Gastrocnemius medialis (tissue), 4 donors: ENCODE measurements at regions of chr6 and their contacts with region 1.

Region 1: DNA sequence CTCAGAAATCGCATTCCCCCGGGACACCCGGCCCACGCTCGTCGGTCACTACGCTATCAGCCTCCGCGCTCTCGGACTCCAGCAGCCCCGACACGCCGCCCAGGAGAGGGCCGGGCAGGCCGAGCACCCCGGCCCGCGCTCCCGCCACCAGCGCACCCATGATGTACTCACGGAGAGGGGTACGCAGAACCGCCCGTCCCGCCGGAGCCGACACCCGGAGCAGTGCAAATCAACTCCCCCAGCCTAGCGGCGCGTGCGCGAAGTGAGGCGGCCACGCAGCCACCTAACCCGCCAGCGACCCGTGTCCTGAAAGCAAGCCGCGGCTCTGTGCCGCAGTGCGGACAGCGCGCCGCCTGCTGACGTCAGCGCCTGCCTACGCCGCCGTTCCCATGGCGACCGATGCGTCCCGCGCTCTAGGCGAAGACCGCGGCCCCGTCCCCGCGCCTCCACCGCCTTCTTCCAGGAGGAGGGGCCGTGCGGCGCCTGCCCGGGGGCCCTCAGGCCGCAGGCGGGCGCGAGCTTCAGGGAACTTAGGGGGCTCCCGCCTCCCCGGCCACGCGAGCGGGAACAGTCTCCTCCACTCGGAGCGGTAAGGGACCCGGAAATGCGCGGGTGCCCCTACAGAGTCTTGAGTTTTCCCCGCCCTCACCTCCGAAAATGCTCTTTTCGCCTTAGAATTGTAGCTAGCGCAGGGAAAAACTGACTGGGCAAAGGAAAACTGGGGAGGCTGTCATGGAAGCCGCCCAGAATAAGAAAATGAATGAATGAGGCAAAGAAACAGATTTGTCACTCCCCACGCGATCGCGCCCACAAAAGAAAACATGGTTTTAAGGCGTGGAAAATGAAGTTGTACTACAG is at the start of gene AHI1:
- DNase-seq: peak; percentile 89 to 93
- ATAC-seq: peak; percentile 87 to 89
- H3K4me3 ChIP-seq: peak within 1 kb of the TSS; percentile 89 to 99 (median 94)
- H3K27ac ChIP-seq: peak within 1 kb of the TSS; percentile 92 to 97 (median 96)
- H3K4me1 ChIP-seq: peaks cover 15 to 28% of the 10 kb centered on the region in 2 donors
- H3K27me3 ChIP-seq: no peaks in the 10 kb centered on the region
- CTCF ChIP-seq: peak in 4 of 5 experiments; percentile 15 to 39 (median 30)
- POLR2A ChIP-seq: peak; percentile 81 to 93
- total RNA-seq, gene AHI1: 3.5 to 16.8 (median 8.2) TPM

Region 2: DNA sequence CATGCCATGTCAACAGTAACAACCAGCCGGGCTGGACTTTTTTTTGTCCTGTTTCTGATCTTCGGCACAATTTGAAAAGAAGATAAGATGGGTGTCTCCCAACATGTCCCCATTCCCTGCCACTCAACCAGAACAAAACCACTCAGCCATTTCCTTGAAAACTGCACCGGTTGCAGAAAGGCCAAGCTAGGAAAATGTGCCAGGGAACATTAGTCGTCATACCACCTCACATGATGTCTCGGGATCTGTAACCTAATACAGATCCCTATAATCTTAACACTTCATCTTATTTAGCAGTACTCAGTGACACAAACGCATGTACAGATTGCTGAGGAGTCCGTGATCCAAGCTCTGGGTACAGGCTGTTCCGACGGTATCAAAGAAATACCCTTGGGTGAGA is 594.2 kb before region 1 on chr6:
- in situ Hi-C with region 1: no loop called
- intact Hi-C with region 1: loop called (anchors 5 kb)
- DNase-seq: peak; percentile 58 to 67
- ATAC-seq: peak; percentile 93 to 96
- H3K4me3 ChIP-seq: no peak overlapping the region
- H3K27ac ChIP-seq: peak overlapping the region; percentile 70 to 90 (median 78)
- H3K4me1 ChIP-seq: peaks cover 13 to 23% of the 10 kb centered on the region in 2 donors
- H3K27me3 ChIP-seq: no peaks in the 10 kb centered on the region
- CTCF ChIP-seq: no peak
- POLR2A ChIP-seq: no peak

Region 3: DNA sequence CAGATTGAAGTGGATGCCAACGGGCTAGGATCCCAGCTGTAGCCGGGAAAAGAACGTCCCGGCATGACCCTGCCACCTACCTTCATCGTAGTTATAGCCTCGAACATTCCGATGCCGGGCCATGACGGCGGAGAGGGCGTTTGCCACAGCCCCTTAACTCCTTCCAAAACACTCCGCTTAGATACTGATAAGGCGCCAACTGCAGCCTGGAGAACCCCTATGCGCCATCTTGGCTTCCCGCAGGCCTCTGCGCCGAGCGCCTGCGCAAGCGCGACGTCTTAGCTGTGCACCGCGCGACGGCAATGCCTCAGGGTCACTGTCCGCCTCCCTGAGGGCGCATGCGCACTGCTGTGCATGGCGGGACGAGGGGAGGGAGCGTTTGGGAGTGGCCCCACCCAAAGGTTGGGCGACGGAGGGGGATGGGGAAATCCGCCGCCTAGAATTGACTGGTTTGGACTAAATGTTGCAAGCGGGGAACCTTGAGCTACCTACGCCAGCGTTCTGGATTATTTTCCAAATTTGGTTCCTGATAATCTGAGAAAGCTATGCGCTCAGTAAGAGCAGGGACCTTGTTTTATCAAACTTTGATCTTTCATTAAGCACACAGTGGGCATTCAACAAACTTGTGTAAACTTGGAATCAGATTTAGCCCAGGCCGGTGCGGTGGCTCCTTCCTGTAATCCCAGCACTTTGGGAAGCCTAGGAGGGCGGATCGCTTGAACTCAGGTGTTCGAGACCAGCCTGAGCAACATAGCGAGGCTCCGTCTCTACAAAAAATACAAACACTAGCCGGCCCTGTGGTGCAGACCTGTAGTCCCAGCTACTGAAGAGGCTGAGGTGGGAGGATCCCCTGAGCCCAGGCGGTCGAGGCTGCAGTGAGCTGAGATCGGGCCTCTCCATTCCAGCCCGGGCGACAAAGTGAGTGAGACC is 442.8 kb before region 1 on chr6 and contains the start of gene HBS1L:
- in situ Hi-C with region 1: no loop called
- intact Hi-C with region 1: loop called (anchors 10 kb)
- DNase-seq: peak; percentile 92 to 96
- ATAC-seq: peak; percentile 95 to 99
- H3K4me3 ChIP-seq: peak within 1 kb of the TSS; percentile 77 to 90 (median 86)
- H3K27ac ChIP-seq: peak within 1 kb of the TSS; percentile 86 to 89 (median 88)
- H3K4me1 ChIP-seq: peaks cover 13 to 28% of the 10 kb centered on the region in 2 donors
- H3K27me3 ChIP-seq: no peaks in the 10 kb centered on the region
- CTCF ChIP-seq: no peak
- POLR2A ChIP-seq: peak; percentile 80 to 88
- total RNA-seq, gene HBS1L: 97.9 to 139 (median 120) TPM

Region 4: GRCh38 chr6:135362124-135362523 is 135.5 kb before region 1 on chr6:
- in situ Hi-C with region 1: no loop called
- intact Hi-C with region 1: no loop called
- DNase-seq: no peak
- ATAC-seq: no peak
- H3K4me3 ChIP-seq: no peak overlapping the region
- H3K27ac ChIP-seq: no peak overlapping the region
- H3K4me1 ChIP-seq: no peaks in the 10 kb centered on the region
- H3K27me3 ChIP-seq: no peaks in the 10 kb centered on the region
- CTCF ChIP-seq: no peak
- POLR2A ChIP-seq: no peak

Region 5: GRCh38 chr6:135922174-135922573 is 424.5 kb after region 1 on chr6:
- in situ Hi-C with region 1: no loop called
- intact Hi-C with region 1: loop called (anchors 5 kb)
- DNase-seq: peak; percentile 72 to 76
- ATAC-seq: peak; percentile 97 to 99
- H3K4me3 ChIP-seq: peak overlapping the region in 1 of 4 donors; percentile 7
- H3K27ac ChIP-seq: peak overlapping the region; percentile 68 to 78 (median 69)
- H3K4me1 ChIP-seq: peaks cover 38 to 39% of the 10 kb centered on the region in 2 donors
- H3K27me3 ChIP-seq: no peaks in the 10 kb centered on the region
- CTCF ChIP-seq: no peak
- POLR2A ChIP-seq: no peak

Region 6: DNA sequence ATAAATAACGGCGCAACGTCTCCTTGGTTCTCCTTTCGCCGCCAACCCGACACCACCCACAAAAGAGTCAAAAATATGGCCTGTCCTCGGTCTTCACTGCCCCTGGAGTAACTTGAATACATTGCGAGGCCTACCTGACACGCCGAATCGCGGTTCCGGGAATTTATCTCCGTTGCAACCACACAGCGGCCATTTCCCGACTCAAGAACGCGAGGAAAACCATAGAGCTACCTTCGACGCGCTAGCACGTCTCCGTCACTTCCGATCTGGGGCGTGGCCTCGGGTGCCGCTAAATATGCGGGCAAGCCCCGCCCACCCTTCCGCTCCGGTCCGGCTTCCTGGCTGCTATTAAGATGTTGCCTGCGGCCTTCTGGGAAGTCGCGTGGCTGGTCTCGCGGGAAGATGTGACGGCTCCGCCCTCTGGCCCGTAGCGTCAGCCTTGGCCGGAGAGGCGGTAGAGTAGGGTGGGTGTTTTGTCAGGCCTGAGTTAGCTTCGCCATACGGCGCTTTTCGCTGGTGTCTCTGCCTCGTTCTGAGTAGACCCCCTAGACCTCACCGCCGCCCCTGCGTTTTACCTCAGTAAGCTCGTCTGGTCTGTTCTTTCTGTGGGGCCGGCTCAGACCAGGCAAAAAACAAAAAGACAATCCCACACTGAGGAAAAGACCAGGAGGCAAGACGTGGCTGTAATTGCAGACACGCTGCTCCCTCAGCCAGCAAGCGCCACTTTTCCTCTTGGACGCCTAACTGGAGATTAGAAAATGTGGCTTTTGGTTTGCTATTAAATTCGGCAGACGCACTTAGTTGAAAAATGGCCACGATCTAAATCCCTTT is 792.2 kb after region 1 on chr6 and contains the start of gene BCLAF1:
- in situ Hi-C with region 1: no loop called
- intact Hi-C with region 1: loop called (anchors 1 kb)
- DNase-seq: peak; percentile 99 to 100
- ATAC-seq: peak; percentile 85 to 91
- H3K4me3 ChIP-seq: peak within 1 kb of the TSS; percentile 86 to 100 (median 96)
- H3K27ac ChIP-seq: peak within 1 kb of the TSS; percentile 99 to 100 (median 100)
- H3K4me1 ChIP-seq: peaks cover 44 to 48% of the 10 kb centered on the region in 2 donors
- H3K27me3 ChIP-seq: no peaks in the 10 kb centered on the region
- CTCF ChIP-seq: peak in 1 of 5 experiments; percentile 6
- POLR2A ChIP-seq: peak; percentile 98
- total RNA-seq, gene BCLAF1: 27.3 to 83.0 (median 61.8) TPM